PC-9 (cell line): ENCODE measurements at regions of chr2 and their contacts with region 1.

Region 1: DNA sequence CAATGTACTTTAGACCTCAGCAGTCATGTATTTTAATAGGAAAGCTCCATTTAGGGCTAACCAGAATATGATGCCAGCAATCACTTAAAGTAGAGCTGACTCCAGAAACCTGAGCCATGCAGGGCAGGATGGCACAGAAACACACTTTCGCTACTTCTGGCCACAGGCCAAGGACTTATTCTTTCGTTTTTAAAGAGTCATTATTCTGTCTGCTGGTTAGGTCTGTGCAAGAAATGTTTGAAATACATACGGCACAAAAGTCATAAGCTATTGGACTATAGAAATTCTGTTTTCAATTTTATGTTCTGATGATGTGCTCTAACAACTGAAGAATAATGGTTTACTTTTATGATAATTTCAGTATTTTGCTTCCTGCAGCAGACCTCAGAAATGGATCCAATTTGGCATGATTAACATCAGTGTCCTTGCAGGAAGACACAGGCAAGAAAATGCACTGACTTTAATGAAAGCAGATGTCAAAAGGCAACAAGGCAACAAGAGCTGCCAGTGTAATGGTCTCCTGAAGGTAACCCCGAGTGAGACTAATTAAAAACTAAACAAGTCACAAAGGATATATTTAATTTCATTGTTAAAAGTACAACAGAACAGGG is 114.4 kb upstream of the CHRNA1 start:
- DNase-seq: peak in 1 of 2 experiments; percentile 9
- H3K4me3 ChIP-seq: no peak overlapping the region
- H3K27ac ChIP-seq: no peak overlapping the region
- H3K4me1 ChIP-seq: no peaks in the 10 kb centered on the region
- H3K27me3 ChIP-seq: no peaks in the 10 kb centered on the region
- CTCF ChIP-seq: no peak

Region 2: DNA sequence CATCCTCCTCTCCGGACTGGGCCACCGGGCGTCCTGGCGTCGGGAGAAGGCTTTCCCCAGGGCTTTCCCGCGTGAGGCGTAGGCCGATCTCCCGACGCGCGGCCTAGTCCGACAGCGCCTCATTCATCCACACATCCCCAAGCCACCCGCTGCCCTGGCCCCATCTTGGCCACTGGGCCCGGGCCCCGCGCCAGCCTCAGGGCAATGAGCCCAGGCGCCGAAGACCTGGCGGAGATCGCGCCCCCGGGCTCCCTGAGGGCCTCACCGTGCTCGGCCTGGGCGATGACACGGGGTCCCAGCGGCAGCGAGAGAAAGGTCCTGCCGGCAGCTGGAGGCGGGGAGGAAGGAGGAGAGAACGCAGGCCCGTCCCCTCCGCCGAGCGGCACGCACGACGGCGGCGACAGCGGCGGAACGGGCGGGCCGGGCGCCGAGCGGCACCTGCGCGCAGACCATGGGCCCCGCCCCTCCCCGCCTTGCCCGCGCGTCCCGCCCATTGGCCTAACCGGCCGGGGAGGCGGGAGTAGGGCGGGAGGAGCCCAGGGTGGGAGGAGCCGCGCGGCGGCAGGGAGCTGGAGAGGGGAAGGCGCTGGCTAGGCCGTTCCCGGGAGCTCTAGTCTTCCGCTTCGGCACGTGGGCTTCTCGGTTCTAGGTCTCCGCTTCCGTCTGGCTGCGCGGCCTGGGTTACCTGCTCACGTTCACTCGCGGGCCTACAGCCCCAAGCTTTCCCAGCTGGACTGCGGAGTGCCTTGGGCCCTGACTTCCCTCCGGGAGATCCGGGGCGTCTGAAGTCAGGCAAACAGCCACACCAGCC is 630.2 kb before region 1 on chr2 and contains the start of gene OLA1:
- CTCF ChIA-PET with region 1: no interaction called
- POLR2A ChIA-PET with region 1: interaction called, 17 read pairs
- intact Hi-C with region 1: no loop called
- DNase-seq: peak; percentile 90 to 100
- H3K4me3 ChIP-seq: peak within 1 kb of the TSS; percentile 90
- H3K27ac ChIP-seq: peak within 1 kb of the TSS; percentile 87
- H3K4me1 ChIP-seq: peaks cover 40% of the 10 kb centered on the region
- H3K27me3 ChIP-seq: no peaks in the 10 kb centered on the region
- CTCF ChIP-seq: 0 out of 2 replicates have a peak, but pooled peaks have one; percentile 12
- total RNA-seq, gene OLA1: 172 and 263 TPM in 2 replicates

Region 3: GRCh38 chr2:174959787-174960186 is 81.1 kb after region 1 on chr2:
- CTCF ChIA-PET with region 1: no interaction called
- POLR2A ChIA-PET with region 1: interaction called, 10 read pairs
- intact Hi-C with region 1: no loop called
- DNase-seq: no peak
- H3K4me3 ChIP-seq: no peak overlapping the region
- H3K27ac ChIP-seq: no peak overlapping the region
- H3K4me1 ChIP-seq: 0 out of 2 replicates have a peak, but pooled peaks cover 4% of the 10 kb centered on the region
- H3K27me3 ChIP-seq: no peaks in the 10 kb centered on the region
- CTCF ChIP-seq: no peak